ENCODE measurements at regions of chr10 and their contacts with region 1.

Region 1: DNA sequence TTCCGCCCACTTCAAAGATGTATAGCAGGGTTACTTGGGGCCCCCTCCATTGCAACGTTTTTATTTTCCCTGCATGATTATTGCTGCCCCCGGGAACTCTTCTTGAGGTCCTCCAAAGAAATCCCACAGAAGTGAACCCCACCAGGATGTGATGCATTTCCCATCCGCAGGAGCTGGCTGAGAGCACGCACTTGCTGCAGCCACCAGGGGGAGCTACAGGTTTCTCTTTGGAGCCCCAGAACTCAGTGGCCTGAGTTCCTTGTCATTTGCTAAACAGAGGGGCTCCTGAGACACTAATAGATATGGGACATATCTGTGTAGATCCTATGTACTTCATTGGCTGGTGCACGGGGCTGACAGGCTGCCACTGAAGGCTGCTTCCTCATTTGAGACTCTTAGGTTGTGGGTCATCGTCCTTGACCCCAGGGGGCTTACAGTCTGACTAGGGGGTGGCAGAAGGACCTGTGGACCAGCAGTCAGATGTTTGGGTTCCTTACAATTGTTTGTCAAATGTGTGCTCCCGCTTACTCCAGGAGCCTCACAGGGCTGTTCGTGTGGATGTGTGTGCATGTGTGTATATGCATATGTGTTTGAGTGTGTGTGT is 52.3 kb upstream of the ENO4 start:
- DNase-seq: peak in 3 of 4 donors; percentile 62 to 85 (median 67)
- ATAC-seq: peak; percentile 90
- H3K4me3 ChIP-seq: no peak overlapping the region
- H3K27ac ChIP-seq: no peak overlapping the region
- H3K4me1 ChIP-seq: no peaks in the 10 kb centered on the region
- H3K27me3 ChIP-seq: peaks cover 4 to 58% of the 10 kb centered on the region in 2 donors
- CTCF ChIP-seq: peak; percentile 80 to 87

Region 2: GRCh38 chr10:117047947-117048346 is 250.9 kb after region 1 on chr10:
- intact Hi-C with region 1: no loop called
- DNase-seq: no peak
- ATAC-seq: no peak
- H3K4me3 ChIP-seq: no peak overlapping the region
- H3K27ac ChIP-seq: no peak overlapping the region
- H3K4me1 ChIP-seq: no peaks in the 10 kb centered on the region
- H3K27me3 ChIP-seq: no peaks in the 10 kb centered on the region
- CTCF ChIP-seq: no peak

Region 3: GRCh38 chr10:117174439-117175214 is 377.6 kb after region 1 on chr10:
- intact Hi-C with region 1: loop called (anchors 5 to 10 kb)
- DNase-seq: peak in 3 of 4 donors; percentile 62 to 78 (median 74)
- ATAC-seq: peak; percentile 97
- H3K4me3 ChIP-seq: peak overlapping the region; percentile 13 to 44
- H3K27ac ChIP-seq: no peak overlapping the region
- H3K4me1 ChIP-seq: peaks cover 5 to 13% of the 10 kb centered on the region in 2 donors
- H3K27me3 ChIP-seq: peaks cover 44 to 78% of the 10 kb centered on the region in 2 donors
- CTCF ChIP-seq: peak; percentile 83 to 87

Measured in left lung (tissue), 14 donors.